Activated T-helper 2 cell treated with anti-CD3 and anti-CD28 coated beads, Interferon-gamma antibody, Interleukin-2, Interleukin-4, amounts not matched to agents 10 μg/mL and 5 μg/mL and 100 μg/mL, durations not matched to agents 14 hours and 24 hours and 36 hours (primary cell): ENCODE measurements at regions of chr14 and their contacts with region 1.

Region 1: GRCh38 chr14:76956316-76957090 is 72.0 kb downstream of the IRF2BPL start:
- DNase-seq: peak; percentile 87
- H3K4me3 Mint-ChIP-seq: peak overlapping the region; percentile 78
- H3K27ac Mint-ChIP-seq: peak overlapping the region; percentile 96
- H3K4me1 Mint-ChIP-seq: peaks cover 73% of the 10 kb centered on the region
- H3K27me3 Mint-ChIP-seq: no peaks in the 10 kb centered on the region

Region 2: GRCh38 chr14:76926521-76927251 is 29.8 kb before region 1 on chr14:
- intact Hi-C with region 1: loop called (anchors 1 kb)
- DNase-seq: peak; percentile 74
- H3K4me3 Mint-ChIP-seq: no peak overlapping the region
- H3K27ac Mint-ChIP-seq: peak overlapping the region; percentile 58
- H3K4me1 Mint-ChIP-seq: peaks cover 58% of the 10 kb centered on the region
- H3K27me3 Mint-ChIP-seq: no peaks in the 10 kb centered on the region

Region 3: DNA sequence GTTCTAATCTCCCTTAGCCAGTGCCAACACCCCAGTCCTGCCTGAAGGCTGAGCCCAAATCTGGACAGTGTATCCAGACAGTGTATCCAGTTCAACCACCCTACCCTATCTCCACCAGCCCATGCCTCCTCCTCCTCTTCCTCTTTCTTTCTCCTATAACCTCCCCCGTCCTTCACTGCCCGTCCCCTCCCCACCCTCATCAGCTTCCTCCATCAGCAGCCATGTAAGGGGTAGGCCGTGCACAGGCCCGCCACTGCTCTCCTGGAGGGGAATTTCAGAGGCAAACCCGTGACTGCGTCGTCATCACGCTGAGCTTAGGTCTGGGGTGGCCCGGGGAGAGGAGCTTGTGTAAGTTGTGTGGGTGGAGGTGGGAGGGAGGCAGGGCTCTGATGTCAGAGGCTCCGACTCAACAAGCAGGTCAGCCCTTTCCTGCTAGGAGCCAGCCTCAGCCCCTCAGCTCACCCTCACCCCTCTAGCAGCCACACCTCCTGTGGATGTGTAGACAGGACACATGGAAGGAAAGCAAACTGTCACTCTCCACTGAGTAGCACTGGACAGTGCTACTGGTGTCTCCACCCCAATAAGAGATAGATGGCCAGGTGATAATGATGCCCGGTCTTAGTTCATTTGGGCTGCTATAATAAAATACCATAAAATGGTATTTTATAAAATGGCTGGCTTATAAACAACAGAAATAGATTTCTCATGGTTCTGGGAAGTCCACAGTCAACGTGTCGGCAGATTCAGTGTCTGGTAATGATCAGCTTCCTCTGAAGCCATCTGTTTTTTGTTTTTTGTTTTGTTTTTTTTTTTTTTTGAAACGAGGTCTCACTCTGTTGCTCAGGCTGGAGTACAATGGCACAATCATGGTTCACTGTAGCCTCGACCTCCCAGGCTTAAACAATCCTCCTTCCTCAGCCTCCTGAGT is 21.6 kb after region 1 on chr14:
- intact Hi-C with region 1: loop called (anchors 1 kb)
- DNase-seq: peak; percentile 75
- H3K4me3 Mint-ChIP-seq: no peak overlapping the region
- H3K27ac Mint-ChIP-seq: peak overlapping the region; percentile 86
- H3K4me1 Mint-ChIP-seq: peaks cover 31% of the 10 kb centered on the region
- H3K27me3 Mint-ChIP-seq: no peaks in the 10 kb centered on the region

Region 4: DNA sequence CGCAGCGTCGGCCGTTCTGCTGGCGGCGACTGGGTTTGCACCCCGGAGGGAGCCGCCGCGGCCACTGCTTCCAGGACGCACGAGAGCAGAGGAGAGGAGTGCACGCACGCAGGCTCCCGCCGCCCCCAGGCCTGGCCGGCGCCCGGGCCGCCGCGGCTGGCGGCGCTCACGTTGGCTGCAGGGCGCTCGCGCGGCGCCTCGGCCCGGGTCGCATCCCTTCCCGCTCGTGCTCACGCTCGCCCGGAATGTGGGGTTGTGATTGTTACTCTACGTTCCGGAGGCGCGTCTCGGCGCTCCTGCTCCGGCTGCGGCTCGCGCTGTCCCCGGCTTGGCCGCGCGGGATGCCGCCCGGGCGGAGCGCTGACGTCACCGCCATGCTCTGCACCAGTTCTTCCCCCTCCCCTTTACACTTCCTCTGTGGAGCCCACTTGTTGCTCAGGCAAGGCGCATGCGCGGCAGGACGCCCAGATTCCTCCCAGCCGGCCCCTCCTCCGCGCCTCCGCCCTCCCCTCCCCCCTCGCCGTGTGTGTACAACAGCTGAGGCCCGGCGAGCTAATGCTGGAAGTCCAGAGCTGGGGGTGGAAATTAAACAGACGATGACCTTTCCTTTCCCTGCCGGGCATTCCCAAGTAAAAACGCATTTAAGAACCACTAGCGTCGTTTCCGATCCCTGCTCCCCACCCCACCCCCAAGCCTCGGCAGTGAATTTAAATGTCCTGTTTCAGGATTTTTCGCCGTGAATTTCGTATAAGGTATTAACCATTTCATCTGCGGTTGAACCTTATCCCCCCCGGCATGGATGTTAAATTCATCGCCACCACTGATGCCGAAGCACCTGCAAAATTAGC is 72.1 kb after region 1 on chr14 and contains the start of gene IRF2BPL:
- intact Hi-C with region 1: loop called (anchors 1 kb)
- DNase-seq: peak; percentile 94
- H3K4me3 Mint-ChIP-seq: peak within 1 kb of the TSS; percentile 89
- H3K27ac Mint-ChIP-seq: peak within 1 kb of the TSS; percentile 94
- H3K4me1 Mint-ChIP-seq: peaks cover 49% of the 10 kb centered on the region
- H3K27me3 Mint-ChIP-seq: no peaks in the 10 kb centered on the region
- total RNA-seq, gene IRF2BPL: 34.8 and 35.8 TPM in 2 replicates

Region 5: GRCh38 chr14:77040059-77040740 is 83.7 kb after region 1 on chr14:
- intact Hi-C with region 1: loop called (anchors 1 kb)
- DNase-seq: peak; percentile 87
- H3K4me3 Mint-ChIP-seq: peak overlapping the region; percentile 76
- H3K27ac Mint-ChIP-seq: peak overlapping the region; percentile 89
- H3K4me1 Mint-ChIP-seq: peaks cover 81% of the 10 kb centered on the region
- H3K27me3 Mint-ChIP-seq: no peaks in the 10 kb centered on the region

Region 6: DNA sequence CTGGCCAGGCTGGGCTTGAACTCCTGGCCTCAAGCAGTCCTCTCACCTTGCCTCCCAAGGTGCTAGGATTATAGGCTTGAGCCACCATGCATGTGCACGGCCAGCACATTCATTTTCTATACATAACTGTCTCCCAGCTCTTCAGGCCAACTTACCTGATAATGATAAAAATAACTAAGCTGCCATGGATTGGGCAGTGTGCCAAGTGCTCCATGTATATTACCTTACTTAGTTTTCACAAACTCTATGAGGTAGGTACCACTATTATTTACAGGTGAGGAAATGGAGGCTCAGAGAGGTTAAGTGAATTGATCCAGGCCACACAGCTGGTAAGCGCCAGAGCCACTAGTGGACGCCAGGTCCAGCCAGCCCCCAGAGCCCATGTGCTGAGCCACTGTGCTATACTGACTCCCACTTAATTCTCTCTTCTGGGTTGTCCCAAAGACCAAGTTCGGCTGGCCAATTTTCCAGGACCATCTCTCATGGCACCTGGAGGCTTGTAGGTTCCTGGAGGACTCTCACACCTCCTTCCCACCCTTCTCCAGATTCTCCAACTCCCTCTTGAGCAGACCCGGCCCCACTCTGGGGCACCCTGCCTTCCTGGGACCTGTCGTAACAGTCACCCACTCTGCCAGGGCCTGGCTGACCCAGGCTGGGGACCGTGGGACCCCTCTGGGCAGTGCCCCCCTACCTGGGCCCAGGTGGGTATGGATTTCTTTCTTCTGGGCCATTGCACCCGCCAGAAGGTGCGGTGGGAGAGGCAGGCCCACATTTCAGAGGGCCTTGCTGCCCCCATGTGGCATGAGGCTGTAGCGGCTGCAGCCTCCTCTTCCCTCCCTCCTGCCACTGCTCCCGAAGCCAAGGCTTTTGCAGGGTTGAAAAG is 111.4 kb after region 1 on chr14:
- intact Hi-C with region 1: no loop called
- DNase-seq: peak; percentile 45
- H3K4me3 Mint-ChIP-seq: no peak overlapping the region
- H3K27ac Mint-ChIP-seq: no peak overlapping the region
- H3K4me1 Mint-ChIP-seq: no peaks in the 10 kb centered on the region
- H3K27me3 Mint-ChIP-seq: no peaks in the 10 kb centered on the region